Lower leg skin (tissue), 4 donors: ENCODE measurements at regions of chr18 and their contacts with region 1.

Region 1: GRCh38 chr18:56028514-56028913 is 440.5 kb upstream of the TCF4 start:
- DNase-seq: no peak
- H3K4me3 ChIP-seq: no peak overlapping the region
- CTCF ChIP-seq: no peak
- POLR2A ChIP-seq: no peak

Region 2: DNA sequence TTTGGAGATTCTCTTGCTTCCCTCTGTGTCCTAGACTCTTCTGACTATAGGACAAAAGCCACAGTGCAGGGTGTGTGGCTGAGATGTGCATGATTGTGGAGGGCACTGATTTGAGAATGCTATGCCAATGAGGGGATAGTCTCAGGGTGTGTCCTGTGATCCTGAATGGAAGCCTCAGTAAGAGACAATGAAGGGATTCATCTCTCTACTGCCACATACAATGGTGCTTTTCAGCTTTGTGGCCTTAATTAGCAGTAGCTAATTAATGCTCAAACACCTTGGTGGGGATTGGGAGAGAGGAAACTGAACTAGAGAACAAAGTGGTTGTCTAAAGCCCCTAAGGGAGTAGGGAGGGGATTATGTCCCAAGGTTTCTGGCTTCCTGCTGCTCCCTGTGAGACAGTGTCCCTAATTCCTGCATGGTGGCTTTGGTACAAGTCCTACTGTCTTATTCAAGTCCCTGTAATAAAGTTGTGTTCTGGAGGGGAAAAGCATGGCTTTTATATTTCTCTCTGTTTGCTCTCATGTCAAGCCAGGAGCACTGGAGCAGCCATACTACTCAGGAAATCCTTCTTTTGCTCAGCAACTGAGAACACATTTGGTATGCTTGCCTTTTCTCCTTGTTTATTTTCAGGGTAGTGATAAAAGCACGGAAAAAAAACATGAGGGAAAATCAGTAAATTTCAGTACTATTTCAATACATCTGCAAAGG is 25.4 kb before region 1 on chr18:
- intact Hi-C with region 1: loop called (anchors 1 kb)
- DNase-seq: no peak
- H3K4me3 ChIP-seq: no peak overlapping the region
- CTCF ChIP-seq: no peak
- POLR2A ChIP-seq: no peak